Posterior cingulate gyrus (tissue), 11 donors: ENCODE measurements at regions of chr7 and their contacts with region 1.

Region 1: DNA sequence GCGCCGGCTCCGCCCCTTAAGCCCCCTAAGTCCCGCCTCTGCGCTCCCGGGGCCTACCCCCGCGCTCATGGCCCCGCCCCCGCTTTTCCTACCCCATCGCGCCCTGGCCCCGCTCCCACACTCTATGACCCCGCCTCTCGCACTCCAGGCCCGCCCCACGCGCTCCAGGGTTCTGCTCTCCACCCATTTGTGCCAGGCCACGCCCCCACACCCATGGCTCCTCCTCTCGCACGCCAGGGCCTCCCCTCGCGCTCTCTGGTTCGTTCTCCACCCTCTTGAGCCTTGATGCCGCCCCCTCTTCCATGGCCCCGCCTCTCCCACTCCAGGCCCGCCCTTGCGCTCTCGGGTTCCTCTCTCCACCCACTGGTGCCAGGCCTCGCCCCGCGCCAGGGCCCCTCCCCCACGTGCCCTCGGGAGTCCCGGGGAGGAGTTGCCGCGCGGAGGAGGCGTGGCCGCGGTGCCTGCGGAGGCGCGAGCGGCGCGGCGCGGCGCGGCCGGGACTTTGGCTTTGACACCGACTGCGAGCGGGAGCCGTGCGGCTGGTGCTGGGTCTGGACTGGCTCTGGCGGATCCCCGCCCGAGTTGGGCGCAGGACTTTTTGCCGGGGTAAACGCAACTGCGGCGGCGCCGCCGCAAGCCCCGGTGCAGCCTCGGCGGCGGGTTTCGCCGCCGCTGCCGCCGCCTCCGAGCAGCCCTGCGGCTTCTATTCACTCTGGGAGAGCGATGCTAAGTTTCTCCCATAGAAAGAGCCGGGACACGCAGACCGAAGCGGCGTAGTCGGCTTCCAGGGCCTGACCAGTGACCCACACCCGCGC is at the start of gene EEPD1:
- DNase-seq: peak; percentile 99 to 100 (median 100)

Region 2: GRCh38 chr7:36188266-36188665 is 35.3 kb after region 1 on chr7:
- intact Hi-C with region 1: loop called (anchors 5 kb)
- DNase-seq: peak in 7 of 10 donors; percentile 32 to 93 (median 57)

Region 3: DNA sequence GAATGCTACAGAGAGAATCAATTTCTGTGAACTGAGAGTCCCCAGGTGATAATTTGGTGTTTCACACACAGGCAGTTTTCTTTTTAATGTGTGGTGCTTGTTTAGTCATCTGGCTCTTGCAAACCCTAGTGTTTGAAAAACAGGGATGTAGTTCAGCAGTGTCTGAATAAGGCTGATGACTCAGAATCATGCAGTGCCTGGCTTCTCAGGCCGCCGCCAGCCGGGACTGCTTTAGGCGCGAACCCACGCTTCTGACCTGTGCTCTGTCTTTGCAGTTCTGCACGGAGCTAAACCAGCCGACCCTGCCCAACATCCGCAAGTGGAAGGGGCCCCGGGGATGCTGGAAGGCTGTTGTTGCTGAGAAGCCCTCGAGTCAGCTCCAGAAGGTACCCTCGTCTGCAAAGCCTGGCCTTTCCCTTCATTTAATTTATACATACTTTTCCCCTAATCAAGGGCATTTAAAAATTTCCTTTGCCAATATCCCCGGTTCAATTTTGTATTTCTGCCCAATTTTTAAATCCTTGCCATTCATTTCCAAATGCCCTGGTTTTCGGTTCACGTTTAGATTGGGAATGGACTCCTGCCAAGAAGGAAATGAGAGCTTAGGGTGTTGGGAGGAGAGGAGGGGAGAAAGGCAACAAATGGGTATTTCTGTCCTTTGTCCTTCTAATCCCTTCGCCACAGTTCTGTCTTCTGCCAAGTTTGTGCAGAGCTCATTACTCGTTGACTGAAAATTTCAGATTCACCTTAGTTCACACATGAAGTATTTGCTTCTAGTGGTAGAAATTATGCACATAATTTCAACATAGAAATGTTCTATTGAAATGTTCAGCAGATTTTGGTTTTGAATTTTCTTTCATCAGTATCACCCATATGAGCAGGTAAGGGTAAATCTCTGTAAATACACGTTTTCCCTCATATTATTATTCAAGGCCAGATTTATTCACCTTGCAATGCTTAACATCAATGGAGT is 128.2 kb after region 1 on chr7:
- intact Hi-C with region 1: loop called (anchors 2 kb)
- DNase-seq: peak; percentile 67 to 97 (median 80)